ENCODE measurements at regions of chr12 and their contacts with region 1.

Region 1: GRCh38 chr12:123972457-123973401 is at the starts of genes CCDC92 and ZNF664:
- DNase-seq: peak; percentile 98
- H3K4me3 Mint-ChIP-seq: peak within 1 kb of the TSS; percentile 92
- H3K27ac Mint-ChIP-seq: peak within 1 kb of the TSS; percentile 88
- H3K4me1 Mint-ChIP-seq: peaks cover 32% of the 10 kb centered on the region
- H3K27me3 Mint-ChIP-seq: peaks cover 7% of the 10 kb centered on the region
- total RNA-seq, gene CCDC92: 7.3 and 7.5 TPM in 2 replicates
- total RNA-seq, gene ZNF664: 63.2 and 69.3 TPM in 2 replicates

Region 2: DNA sequence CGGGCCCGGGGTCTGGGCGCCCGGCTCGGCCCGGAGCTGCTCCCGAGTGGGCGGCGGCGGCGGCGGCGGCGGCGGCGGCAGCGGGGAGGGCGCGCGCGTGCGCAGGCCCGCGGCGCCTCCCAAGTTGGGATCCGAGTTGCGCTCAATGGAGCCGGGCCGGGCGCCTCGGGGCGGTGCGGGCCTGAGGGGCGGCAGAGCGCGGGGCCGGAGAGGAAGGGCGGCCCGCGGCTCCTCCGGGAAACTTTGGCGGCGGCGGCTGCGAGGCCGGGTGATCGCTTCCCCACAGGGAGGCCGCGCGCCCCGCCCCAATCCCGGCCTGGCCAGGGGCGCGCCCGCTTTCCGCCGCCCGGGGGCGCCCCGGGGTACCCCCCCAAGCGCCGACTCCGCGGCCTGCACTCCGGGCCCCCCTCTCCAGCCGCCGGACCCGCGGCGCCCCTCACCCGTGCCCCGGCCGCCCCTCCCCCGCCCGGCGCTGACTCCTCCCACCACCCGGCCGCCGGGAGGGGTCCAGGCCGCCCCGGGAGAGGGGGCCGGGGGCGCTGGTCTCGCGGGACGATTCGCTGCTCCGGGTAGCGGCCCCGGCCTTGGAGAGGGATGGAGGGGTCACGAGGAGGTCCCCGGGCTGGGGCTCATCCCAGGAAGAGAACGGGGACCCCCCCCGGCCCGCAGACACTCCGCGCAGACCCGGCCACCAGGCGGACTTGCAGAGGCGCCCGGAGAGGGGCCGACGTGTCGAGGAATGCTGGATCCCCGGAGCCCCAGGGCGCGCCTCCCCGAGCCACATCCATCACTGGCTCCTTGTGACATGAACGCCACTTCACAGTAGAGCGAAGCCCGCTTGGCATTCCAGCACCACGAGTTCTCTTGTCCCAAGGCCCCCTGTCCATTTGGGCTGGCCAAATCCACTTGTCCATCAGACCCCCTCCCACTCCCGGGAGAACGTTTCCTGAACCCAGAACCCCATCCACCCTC is 438.8 kb before region 1 on chr12 and contains the start of gene RILPL1:
- intact Hi-C with region 1: loop called (anchors 5 kb)
- DNase-seq: peak; percentile 84
- H3K4me3 Mint-ChIP-seq: peak within 1 kb of the TSS; percentile 82
- H3K27ac Mint-ChIP-seq: peak within 1 kb of the TSS; percentile 81
- H3K4me1 Mint-ChIP-seq: peaks cover 16% of the 10 kb centered on the region
- H3K27me3 Mint-ChIP-seq: peaks cover 15% of the 10 kb centered on the region
- total RNA-seq, gene RILPL1: 4.1 and 4.6 TPM in 2 replicates

Region 3: GRCh38 chr12:123801573-123802178 is 171.1 kb before region 1 on chr12:
- intact Hi-C with region 1: no loop called
- DNase-seq: no peak
- H3K4me3 Mint-ChIP-seq: no peak overlapping the region
- H3K27ac Mint-ChIP-seq: no peak overlapping the region
- H3K4me1 Mint-ChIP-seq: no peaks in the 10 kb centered on the region
- H3K27me3 Mint-ChIP-seq: no peaks in the 10 kb centered on the region

Region 4: DNA sequence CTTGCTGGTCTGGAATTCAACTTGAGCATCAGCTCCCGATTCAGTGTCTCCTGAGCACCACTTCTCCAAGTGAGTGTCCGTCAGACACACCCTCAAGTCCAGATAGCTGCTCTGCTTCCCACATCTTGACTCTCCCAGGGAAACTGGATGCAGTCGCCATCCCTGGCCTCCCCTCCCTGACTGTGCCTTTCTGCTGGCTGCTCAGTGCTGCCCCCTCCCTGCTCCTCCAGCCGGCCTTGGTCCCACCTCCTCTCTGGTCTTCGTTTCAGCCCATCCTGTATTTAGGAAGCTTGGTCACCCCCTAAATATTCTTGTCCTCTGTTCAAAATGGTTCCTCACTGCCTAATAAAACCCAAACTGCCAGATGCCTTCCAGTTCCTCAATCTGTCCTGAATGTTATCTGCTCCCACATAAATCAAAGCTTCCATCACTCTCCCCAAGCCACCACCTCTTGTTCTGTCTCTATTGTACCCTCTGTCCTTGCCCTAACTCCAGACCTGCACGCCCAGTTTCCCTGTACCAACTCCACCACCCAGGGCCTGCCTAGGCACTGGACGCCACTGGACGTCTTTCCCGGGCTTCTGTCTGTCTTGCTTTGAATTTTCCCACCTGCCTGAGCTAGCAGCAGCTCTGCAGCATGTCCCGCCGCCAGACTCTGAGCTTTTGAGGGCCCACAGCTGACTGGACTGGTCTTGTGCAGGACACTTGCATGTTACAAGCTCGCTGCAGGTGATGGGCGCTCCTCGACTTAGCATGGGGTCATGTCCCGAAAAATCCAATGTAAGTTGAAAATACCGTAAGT is 33.8 kb before region 1 on chr12:
- intact Hi-C with region 1: loop called (anchors 5 kb)
- DNase-seq: peak; percentile 62
- H3K4me3 Mint-ChIP-seq: peak overlapping the region; percentile 86
- H3K27ac Mint-ChIP-seq: peak overlapping the region; percentile 86
- H3K4me1 Mint-ChIP-seq: peaks cover 20% of the 10 kb centered on the region
- H3K27me3 Mint-ChIP-seq: no peaks in the 10 kb centered on the region

Region 5: DNA sequence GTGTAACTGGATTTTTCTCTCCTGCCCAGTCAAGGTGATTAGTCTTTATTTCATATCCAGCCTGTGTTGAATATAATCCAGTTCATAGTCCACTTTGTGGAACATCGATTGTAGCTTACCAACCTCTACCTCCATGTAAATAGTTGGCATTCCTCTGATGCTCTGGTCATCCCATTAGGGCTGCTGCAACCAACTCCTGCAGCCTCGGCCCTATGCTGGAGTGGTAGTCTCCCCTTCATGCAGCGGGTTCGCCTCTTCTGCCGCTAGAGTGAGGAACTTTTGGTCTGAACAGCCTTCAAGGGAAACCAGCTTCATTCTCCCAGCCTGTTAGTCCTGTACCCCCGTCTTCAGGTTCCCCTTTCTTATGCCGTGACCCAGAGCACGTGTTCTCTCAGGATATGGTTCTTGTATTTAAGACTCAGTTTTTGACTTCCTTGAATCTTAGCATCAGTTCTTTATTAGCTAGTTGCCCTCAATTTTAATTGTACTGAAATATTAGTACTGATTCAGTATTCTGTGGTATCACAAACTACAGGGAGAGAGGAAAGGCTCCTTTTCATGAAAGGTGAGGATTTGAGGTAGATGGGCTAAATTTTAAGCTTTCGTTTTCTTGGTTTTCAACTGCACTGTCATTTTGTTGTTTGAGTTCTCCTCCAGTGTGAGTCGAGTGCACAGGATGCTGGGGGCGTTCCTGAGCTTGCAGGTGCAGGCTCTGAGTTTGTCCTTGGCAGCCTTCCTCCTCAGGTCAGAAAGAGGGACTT is 33.5 kb after region 1 on chr12:
- intact Hi-C with region 1: no loop called
- DNase-seq: peak; percentile 80
- H3K4me3 Mint-ChIP-seq: peak overlapping the region; percentile 72
- H3K27ac Mint-ChIP-seq: peak overlapping the region; percentile 90
- H3K4me1 Mint-ChIP-seq: peaks cover 35% of the 10 kb centered on the region
- H3K27me3 Mint-ChIP-seq: no peaks in the 10 kb centered on the region